PC-9 (cell line): ENCODE measurements at regions of chr4 and their contacts with region 1.

Region 1: GRCh38 chr4:139453371-139454110 is 380 bp upstream of the RAB33B start:
- DNase-seq: peak; percentile 86 to 96
- H3K4me3 ChIP-seq: peak overlapping the region; percentile 90
- H3K27ac ChIP-seq: peak overlapping the region; percentile 79
- H3K4me1 ChIP-seq: peaks cover 38% of the 10 kb centered on the region
- H3K27me3 ChIP-seq: no peaks in the 10 kb centered on the region
- CTCF ChIP-seq: peak; percentile 16; the same call in 1 of the 2 replicates

Region 2: GRCh38 chr4:139083956-139084803 is 369.4 kb before region 1 on chr4:
- CTCF ChIA-PET with region 1: no interaction called
- POLR2A ChIA-PET with region 1: no interaction called
- intact Hi-C with region 1: loop called (anchors 5 kb)
- DNase-seq: peak; percentile 65 to 81
- H3K4me3 ChIP-seq: peak overlapping the region; percentile 95
- H3K27ac ChIP-seq: peak overlapping the region; percentile 85
- H3K4me1 ChIP-seq: peaks cover 27% of the 10 kb centered on the region
- H3K27me3 ChIP-seq: no peaks in the 10 kb centered on the region
- CTCF ChIP-seq: no peak

Region 3: GRCh38 chr4:139295206-139295941 is 158.2 kb before region 1 on chr4:
- CTCF ChIA-PET with region 1: no interaction called
- POLR2A ChIA-PET with region 1: no interaction called
- intact Hi-C with region 1: loop called (anchors 2 kb)
- DNase-seq: peak; percentile 66 to 91
- H3K4me3 ChIP-seq: peak overlapping the region; percentile 78
- H3K27ac ChIP-seq: no peak overlapping the region
- H3K4me1 ChIP-seq: peaks cover 21% of the 10 kb centered on the region
- H3K27me3 ChIP-seq: no peaks in the 10 kb centered on the region
- CTCF ChIP-seq: peak; percentile 85

Region 4: GRCh38 chr4:139509727-139510410 is 56.3 kb after region 1 on chr4:
- CTCF ChIA-PET with region 1: no interaction called
- POLR2A ChIA-PET with region 1: interaction called, 27 read pairs
- intact Hi-C with region 1: no loop called
- DNase-seq: no peak
- H3K4me3 ChIP-seq: no peak overlapping the region
- H3K27ac ChIP-seq: no peak overlapping the region
- H3K4me1 ChIP-seq: no peaks in the 10 kb centered on the region
- H3K27me3 ChIP-seq: no peaks in the 10 kb centered on the region
- CTCF ChIP-seq: no peak

Region 5: GRCh38 chr4:140373328-140374129 is 920.0 kb after region 1 on chr4 and contains the start of gene SCOC:
- CTCF ChIA-PET with region 1: no interaction called
- POLR2A ChIA-PET with region 1: no interaction called
- intact Hi-C with region 1: loop called (anchors 5 kb)
- DNase-seq: peak; percentile 96 to 99
- H3K4me3 ChIP-seq: peak within 1 kb of the TSS; percentile 81
- H3K27ac ChIP-seq: peak within 1 kb of the TSS; percentile 81
- H3K4me1 ChIP-seq: peaks cover 25% of the 10 kb centered on the region
- H3K27me3 ChIP-seq: no peaks in the 10 kb centered on the region
- CTCF ChIP-seq: no peak
- total RNA-seq, gene SCOC: 41.7 and 53.0 TPM in 2 replicates